ENCODE measurements at regions of chr9 and their contacts with region 1.

Region 1: DNA sequence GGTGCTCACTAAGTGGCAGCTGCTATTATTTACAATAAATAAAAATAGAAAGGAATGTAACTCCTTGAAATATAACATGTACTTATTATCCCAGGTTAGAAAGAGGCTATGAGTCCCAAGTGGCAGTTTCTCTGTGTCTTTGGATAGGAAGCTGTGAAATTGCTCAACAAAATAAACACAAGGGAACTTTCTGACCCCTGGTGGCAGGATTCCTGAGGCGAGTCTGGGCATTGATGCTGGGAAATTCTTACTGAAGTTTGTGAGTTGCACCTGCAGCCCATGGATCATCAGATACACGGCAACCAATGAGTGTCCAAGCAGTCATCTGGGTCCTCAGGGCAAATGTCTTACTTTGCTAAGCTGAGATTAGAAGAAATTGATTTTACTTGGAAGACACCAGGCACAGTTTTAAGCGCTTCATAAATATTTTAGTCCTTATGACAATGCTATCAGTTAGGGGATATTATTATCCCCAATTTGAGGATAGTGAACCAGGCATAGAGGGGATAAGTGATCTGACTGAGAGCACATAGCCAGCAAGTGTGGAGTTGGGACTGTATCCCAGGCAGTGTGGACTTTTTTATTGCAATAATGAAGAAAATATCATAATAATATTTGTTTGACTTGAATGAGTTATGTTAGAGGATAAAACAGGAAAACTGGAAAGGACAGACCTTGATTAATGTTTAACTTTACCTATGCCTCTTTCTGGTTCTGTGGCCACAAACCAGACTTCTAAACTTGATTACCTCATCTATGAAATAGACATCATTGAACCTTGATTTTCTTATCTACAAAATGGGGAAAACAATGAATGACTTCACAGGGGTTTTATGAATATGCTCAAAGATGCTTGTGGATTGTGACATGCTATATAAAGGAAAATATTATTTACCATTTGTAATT is 265.5 kb upstream of the ADAMTSL1 start:
- DNase-seq: peak; percentile 59
- ATAC-seq: peak; percentile 83
- H3K4me3 ChIP-seq: no peak overlapping the region
- H3K27ac ChIP-seq: no peak overlapping the region
- H3K4me1 ChIP-seq: no peaks in the 10 kb centered on the region
- H3K27me3 ChIP-seq: no peaks in the 10 kb centered on the region
- CTCF ChIP-seq: peak; percentile 64
- EP300 ChIP-seq: no peak
- POLR2A ChIP-seq: no peak
- RAD21 ChIP-seq: no peak

Region 2: GRCh38 chr9:17531642-17532254 is 676.7 kb before region 1 on chr9:
- CTCF ChIA-PET with region 1: no interaction called
- POLR2A ChIA-PET with region 1: no interaction called
- in situ Hi-C with region 1: loop called (anchors 10 kb)
- intact Hi-C with region 1: loop called (anchors 2 kb)
- DNase-seq: peak; percentile 32
- ATAC-seq: peak; percentile 86
- H3K4me3 ChIP-seq: no peak overlapping the region
- H3K27ac ChIP-seq: no peak overlapping the region
- H3K4me1 ChIP-seq: no peaks in the 10 kb centered on the region
- H3K27me3 ChIP-seq: 0 out of 5 replicates have a peak, but pooled peaks cover 0 to 4% of the 10 kb centered on the region in 2 experiments
- CTCF ChIP-seq: peak; percentile 47
- EP300 ChIP-seq: no peak
- POLR2A ChIP-seq: no peak
- RAD21 ChIP-seq: no peak

Region 3: DNA sequence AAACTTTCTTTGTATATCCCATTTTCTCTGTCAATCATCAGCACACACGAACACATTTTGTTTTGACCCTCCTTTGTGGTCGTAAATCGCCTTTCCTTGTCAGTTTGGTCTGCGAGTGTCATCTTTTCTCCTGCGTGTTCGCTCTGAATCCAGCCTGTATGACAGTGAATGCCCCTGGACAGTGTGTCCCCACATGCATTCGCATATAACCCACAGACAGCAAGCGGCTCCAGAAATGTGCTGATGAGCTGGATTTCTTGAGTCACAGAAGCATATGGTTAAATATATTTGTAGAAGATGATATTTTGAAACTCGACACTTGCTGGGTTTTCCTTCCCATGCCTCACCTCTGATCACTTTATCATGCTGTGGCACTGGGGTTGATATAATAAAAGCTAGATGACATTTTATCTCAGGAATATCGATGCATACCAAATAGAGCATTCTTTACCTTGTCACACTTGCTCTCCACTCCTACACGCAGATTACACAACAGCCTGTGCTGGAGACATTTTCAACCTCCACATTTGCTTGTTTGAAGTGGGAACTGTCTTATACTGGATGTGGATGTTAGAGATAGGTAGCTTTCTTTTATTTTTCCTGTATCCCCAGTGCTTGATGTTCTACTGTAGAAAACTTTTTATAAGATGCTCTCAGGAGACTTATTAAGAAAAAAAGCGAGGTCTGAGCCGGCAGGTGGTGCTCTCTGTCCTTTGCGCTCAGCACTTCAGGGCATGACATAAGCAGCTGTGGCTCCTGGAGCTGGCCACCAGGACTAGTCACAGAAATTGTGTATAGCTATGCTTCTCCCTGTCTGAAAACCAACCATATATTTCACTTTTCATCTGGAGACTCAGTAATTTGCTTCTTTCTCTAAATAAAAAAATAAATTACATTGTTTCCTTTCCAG is 414.4 kb before region 1 on chr9:
- CTCF ChIA-PET with region 1: no interaction called
- POLR2A ChIA-PET with region 1: no interaction called
- in situ Hi-C with region 1: no loop called
- intact Hi-C with region 1: loop called (anchors 1 kb)
- DNase-seq: peak; percentile 27
- ATAC-seq: peak; percentile 97
- H3K4me3 ChIP-seq: no peak overlapping the region
- H3K27ac ChIP-seq: no peak overlapping the region
- H3K4me1 ChIP-seq: no peaks in the 10 kb centered on the region
- H3K27me3 ChIP-seq: no peaks in the 10 kb centered on the region
- CTCF ChIP-seq: peak; percentile 28; the same call in 1 of the 2 replicates
- EP300 ChIP-seq: no peak
- POLR2A ChIP-seq: no peak
- RAD21 ChIP-seq: no peak

Region 4: GRCh38 chr9:17810728-17811571 is 397.5 kb before region 1 on chr9:
- CTCF ChIA-PET with region 1: interaction called, 20 read pairs
- POLR2A ChIA-PET with region 1: no interaction called
- in situ Hi-C with region 1: loop called (anchors 5 kb)
- intact Hi-C with region 1: loop called (anchors 1 kb)
- DNase-seq: peak; percentile 41
- ATAC-seq: peak; percentile 57; the same call in 1 of the 3 replicates
- H3K4me3 ChIP-seq: no peak overlapping the region
- H3K27ac ChIP-seq: no peak overlapping the region
- H3K4me1 ChIP-seq: no peaks in the 10 kb centered on the region
- H3K27me3 ChIP-seq: no peaks in the 10 kb centered on the region
- CTCF ChIP-seq: peak; percentile 65
- EP300 ChIP-seq: no peak
- POLR2A ChIP-seq: no peak
- RAD21 ChIP-seq: peak; percentile 34; the same call in 1 of the 2 replicates

Region 5: DNA sequence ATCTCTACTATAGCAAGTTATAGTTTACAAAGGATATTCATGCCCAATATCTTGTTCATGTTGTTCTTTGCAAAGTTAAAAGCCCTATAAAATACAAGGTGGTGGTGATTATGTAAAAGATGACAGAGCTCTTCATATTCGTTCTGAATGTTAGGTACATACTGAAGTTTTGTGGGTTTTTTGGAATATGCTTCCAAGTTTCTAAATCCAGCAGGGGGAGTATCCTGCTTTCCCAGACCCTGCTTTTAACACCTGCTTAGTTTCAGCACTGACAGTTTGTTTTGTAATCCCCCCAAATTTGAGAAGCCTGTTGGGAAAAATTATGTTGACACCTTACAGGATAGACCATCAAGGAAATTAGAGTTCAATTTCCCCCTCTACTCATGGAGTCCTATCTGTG is 191.3 kb before region 1 on chr9:
- CTCF ChIA-PET with region 1: no interaction called
- POLR2A ChIA-PET with region 1: no interaction called
- in situ Hi-C with region 1: no loop called
- intact Hi-C with region 1: loop called (anchors 5 kb)
- DNase-seq: no peak
- ATAC-seq: no peak
- H3K4me3 ChIP-seq: no peak overlapping the region
- H3K27ac ChIP-seq: no peak overlapping the region
- H3K4me1 ChIP-seq: no peaks in the 10 kb centered on the region
- H3K27me3 ChIP-seq: no peaks in the 10 kb centered on the region
- CTCF ChIP-seq: no peak
- EP300 ChIP-seq: no peak
- POLR2A ChIP-seq: no peak
- RAD21 ChIP-seq: no peak

Region 6: DNA sequence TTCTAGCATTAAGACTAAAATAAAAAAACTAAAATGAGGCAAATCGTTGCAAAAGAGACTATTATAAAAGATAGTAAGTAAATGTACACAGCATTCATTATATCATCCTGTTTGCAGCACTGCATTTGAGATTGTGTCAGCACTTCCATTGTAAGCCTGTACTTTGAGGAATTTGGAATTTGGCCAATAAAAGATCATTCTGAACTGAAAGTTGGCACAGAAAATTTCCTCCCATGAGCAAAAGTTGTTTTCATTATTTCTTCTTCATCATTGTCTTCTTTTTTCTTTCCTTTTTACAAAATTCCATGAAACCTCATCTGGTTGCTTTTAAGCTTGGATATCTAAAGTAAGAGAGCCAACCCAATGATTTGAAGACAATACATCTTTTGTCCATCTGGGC is 66.3 kb after region 1 on chr9:
- CTCF ChIA-PET with region 1: no interaction called
- POLR2A ChIA-PET with region 1: no interaction called
- in situ Hi-C with region 1: no loop called
- intact Hi-C with region 1: no loop called
- DNase-seq: no peak
- ATAC-seq: no peak
- H3K4me3 ChIP-seq: no peak overlapping the region
- H3K27ac ChIP-seq: no peak overlapping the region
- H3K4me1 ChIP-seq: no peaks in the 10 kb centered on the region
- H3K27me3 ChIP-seq: no peaks in the 10 kb centered on the region
- CTCF ChIP-seq: no peak
- EP300 ChIP-seq: no peak
- POLR2A ChIP-seq: no peak
- RAD21 ChIP-seq: no peak